ENCODE measurements at regions of chrX and their contacts with region 1.

Region 1: GRCh38 chrX:74382613-74383012 is 38.7 kb upstream of the SLC16A2 start:
- DNase-seq: peak; percentile 22 to 85 (median 62)

Region 2: DNA sequence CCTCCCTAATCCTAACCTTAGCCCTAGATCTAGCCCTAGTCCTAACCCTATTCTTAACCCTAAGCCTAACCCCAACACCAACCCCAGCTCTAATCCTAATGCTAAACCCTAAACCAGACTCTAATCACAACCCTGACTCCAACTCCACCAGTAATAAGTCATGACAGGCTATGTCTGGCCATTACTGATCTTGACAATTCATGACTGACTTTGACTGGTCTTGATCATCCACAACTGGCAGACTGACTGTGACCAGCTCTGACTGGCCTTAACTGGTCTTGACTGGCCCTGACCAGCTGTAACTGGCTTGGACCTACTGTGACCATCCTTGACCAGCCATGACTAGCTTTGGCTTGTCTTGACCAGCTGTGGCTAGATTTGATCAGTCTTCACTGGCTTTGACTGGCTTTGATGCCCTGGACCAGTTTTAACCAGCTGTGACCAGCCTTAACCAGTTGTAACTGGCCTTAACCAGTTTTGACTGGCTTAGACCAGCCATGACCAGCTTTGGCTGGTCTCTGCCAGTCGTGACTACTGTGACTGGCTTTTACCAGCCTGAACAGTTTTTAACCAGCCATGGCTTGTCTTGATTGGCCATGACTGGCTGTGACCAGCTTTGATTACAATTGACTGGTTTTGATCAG is 163.4 kb after region 1 on chrX:
- intact Hi-C with region 1: loop called (anchors 5 kb)
- DNase-seq: no peak